Posterior vena cava (tissue), 2 donors: ENCODE measurements at regions of chr21 and their contacts with region 1.

Region 1: DNA sequence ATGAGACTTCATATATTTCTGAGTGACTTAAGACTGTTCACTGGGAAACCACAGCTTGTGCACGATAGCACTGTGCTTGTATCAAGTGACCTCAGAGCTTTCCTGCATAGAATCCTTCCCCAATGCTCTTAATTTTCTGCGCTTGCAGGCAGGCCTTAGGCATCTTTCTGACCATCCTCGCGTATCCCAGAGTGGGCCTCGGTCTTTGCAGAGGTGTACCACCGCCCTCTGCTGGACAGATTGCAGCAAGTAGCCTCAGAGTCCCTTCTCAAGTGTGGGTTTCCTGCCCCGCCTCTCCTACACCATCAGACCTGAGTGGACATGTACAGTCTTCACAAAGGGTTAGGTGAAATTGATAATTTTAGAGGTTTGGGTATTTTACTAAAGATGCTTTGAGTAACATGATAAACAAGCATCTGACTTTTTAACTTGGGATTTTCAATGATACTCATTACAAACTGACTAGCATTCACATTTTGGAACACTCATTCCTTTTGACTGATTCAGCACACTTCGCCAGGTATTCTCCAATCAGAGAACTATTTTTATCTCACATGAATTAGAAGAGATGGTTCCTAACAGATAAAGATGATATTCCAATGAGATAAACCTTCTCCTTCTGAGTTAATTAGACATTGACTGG is 246.5 kb upstream of the USP25 start:
- DNase-seq: peak; percentile 95

Region 2: GRCh38 chr21:14864211-14865021 is 618.8 kb before region 1 on chr21:
- intact Hi-C with region 1: loop called (anchors 10 kb)
- DNase-seq: peak; percentile 89

Region 3: GRCh38 chr21:15468368-15468767 is 14.9 kb before region 1 on chr21:
- intact Hi-C with region 1: loop called in 1 of 2 experiments (anchors 1 kb)
- DNase-seq: no peak